ENCODE measurements at regions of chr17 and their contacts with region 1.

Region 1: DNA sequence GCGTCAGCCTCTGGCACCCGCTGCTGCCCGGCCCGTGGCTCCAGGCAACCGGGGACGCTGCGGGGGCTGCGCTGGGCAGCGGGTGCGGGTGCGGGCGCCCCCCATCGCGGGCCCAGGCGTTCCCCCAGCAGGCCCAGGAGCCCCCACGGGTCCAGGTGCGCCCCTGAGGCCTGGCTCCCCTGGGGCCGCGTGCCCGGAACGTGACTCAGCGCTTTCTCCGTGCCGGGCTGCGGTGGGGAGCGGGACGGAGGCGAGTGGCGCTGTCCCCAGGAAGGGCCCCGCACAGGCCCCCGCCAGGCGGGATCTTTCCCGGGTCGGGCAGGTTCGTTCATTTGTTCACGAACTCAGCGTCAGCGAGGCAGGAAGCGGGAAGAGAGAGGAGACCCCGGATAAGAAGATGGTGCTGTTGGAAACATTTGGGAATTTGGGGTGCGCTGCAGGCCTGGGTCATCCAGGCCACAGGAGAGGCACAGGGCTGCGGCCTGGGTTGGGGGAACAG is 18.4 kb upstream of the EXOC7 start:
- DNase-seq: no peak
- H3K4me3 Mint-ChIP-seq: no peak overlapping the region
- H3K27ac Mint-ChIP-seq: peak overlapping the region; percentile 58
- H3K4me1 Mint-ChIP-seq: peaks cover 12% of the 10 kb centered on the region
- H3K27me3 Mint-ChIP-seq: no peaks in the 10 kb centered on the region

Region 2: GRCh38 chr17:76182016-76182764 is 60.2 kb after region 1 on chr17:
- intact Hi-C with region 1: loop called (anchors 2 kb)
- DNase-seq: peak; percentile 92
- H3K4me3 Mint-ChIP-seq: peak overlapping the region; percentile 30
- H3K27ac Mint-ChIP-seq: peak overlapping the region; percentile 90
- H3K4me1 Mint-ChIP-seq: peaks cover 51% of the 10 kb centered on the region
- H3K27me3 Mint-ChIP-seq: no peaks in the 10 kb centered on the region

Region 3: GRCh38 chr17:76278952-76279741 is 157.2 kb after region 1 on chr17:
- intact Hi-C with region 1: loop called (anchors 1 kb)
- DNase-seq: peak; percentile 72
- H3K4me3 Mint-ChIP-seq: no peak overlapping the region
- H3K27ac Mint-ChIP-seq: no peak overlapping the region
- H3K4me1 Mint-ChIP-seq: peaks cover 11% of the 10 kb centered on the region
- H3K27me3 Mint-ChIP-seq: no peaks in the 10 kb centered on the region

Region 4: GRCh38 chr17:76296186-76296585 is 174.2 kb after region 1 on chr17:
- intact Hi-C with region 1: loop called (anchors 5 kb)
- DNase-seq: no peak
- H3K4me3 Mint-ChIP-seq: no peak overlapping the region
- H3K27ac Mint-ChIP-seq: no peak overlapping the region
- H3K4me1 Mint-ChIP-seq: peaks cover 3% of the 10 kb centered on the region
- H3K27me3 Mint-ChIP-seq: no peaks in the 10 kb centered on the region